ENCODE measurements at regions of chr6 and their contacts with region 1.

Region 1: DNA sequence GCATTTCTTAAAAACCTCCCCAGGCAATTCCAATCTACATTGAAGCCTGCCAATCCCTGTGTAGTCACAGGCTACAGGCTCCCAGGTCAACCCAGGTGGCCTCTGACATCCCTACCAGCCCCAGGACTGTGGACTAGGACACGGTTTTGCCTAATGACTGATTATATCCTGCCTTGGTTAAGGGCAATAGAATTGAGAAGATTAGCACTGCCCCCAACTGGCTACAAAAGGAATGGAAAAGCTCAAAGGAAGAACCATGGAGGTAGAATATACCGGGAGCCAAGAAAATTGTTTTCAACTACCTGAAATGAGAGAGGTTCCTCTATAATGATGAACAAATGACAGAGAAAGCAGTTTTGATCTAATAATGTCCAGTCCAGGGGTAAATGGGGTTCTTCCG is 421.1 kb upstream of the AGPAT4 start:
- DNase-seq: peak; percentile 32 to 40
- H3K4me3 ChIP-seq: no peak overlapping the region
- H3K4me1 ChIP-seq: no peaks in the 10 kb centered on the region
- H3K27me3 ChIP-seq: peaks cover 11% of the 10 kb centered on the region; the same call in 1 of the 2 replicates

Region 2: GRCh38 chr6:161418463-161418945 is 276.5 kb before region 1 on chr6:
- in situ Hi-C with region 1: loop called (anchors 25 kb)
- DNase-seq: peak; percentile 55 to 73
- H3K4me3 ChIP-seq: no peak overlapping the region
- H3K4me1 ChIP-seq: no peaks in the 10 kb centered on the region
- H3K27me3 ChIP-seq: no peaks in the 10 kb centered on the region

Region 3: GRCh38 chr6:162337412-162337811 is 642.4 kb after region 1 on chr6:
- in situ Hi-C with region 1: no loop called
- DNase-seq: no peak
- H3K4me3 ChIP-seq: no peak overlapping the region
- H3K4me1 ChIP-seq: no peaks in the 10 kb centered on the region
- H3K27me3 ChIP-seq: no peaks in the 10 kb centered on the region

Measured in HAP-1 (cell line).